OCI-LY7 (cell line): ENCODE measurements at regions of chr21 and their contacts with region 1.

Region 1: GRCh38 chr21:33348706-33349105 is 23.9 kb downstream of the IFNAR1 start:
- DNase-seq: no peak
- H3K4me3 ChIP-seq: no peak overlapping the region
- H3K27ac ChIP-seq: no peak overlapping the region
- H3K4me1 ChIP-seq: no peaks in the 10 kb centered on the region
- CTCF ChIP-seq: no peak

Region 2: DNA sequence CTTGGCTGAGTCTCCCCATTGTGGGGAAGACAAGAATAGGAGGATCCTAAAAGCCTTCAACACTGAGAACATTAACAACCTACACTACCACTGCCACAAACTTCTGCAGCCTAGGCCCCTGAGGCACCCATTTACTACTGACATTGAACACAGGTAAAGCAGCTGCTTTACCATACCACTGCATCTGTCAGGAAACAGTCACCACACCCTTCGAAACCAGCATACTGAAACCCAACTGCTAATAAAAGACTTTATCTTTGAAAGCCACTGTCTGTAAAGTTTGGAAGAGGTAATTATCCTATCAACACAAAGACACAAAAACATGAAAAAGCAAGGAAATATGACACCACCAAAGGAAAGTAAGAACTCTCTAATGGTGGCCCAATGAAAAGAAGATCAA is 16.6 kb before region 1 on chr21:
- CTCF ChIA-PET with region 1: interaction called, 3 read pairs
- POLR2A ChIA-PET with region 1: interaction called, 14 read pairs
- intact Hi-C with region 1: no loop called
- DNase-seq: peak; percentile 47
- H3K4me3 ChIP-seq: no peak overlapping the region
- H3K27ac ChIP-seq: peak overlapping the region; percentile 56
- H3K4me1 ChIP-seq: peaks cover 54% of the 10 kb centered on the region
- CTCF ChIP-seq: no peak

Region 3: GRCh38 chr21:33866826-33867225 is 518.1 kb after region 1 on chr21:
- CTCF ChIA-PET with region 1: no interaction called
- POLR2A ChIA-PET with region 1: no interaction called
- intact Hi-C with region 1: no loop called
- DNase-seq: no peak
- H3K4me3 ChIP-seq: no peak overlapping the region
- H3K27ac ChIP-seq: no peak overlapping the region
- H3K4me1 ChIP-seq: no peaks in the 10 kb centered on the region
- CTCF ChIP-seq: no peak